Psoas muscle (tissue), 8 donors: ENCODE measurements at regions of chr1 and their contacts with region 1.

Region 1: DNA sequence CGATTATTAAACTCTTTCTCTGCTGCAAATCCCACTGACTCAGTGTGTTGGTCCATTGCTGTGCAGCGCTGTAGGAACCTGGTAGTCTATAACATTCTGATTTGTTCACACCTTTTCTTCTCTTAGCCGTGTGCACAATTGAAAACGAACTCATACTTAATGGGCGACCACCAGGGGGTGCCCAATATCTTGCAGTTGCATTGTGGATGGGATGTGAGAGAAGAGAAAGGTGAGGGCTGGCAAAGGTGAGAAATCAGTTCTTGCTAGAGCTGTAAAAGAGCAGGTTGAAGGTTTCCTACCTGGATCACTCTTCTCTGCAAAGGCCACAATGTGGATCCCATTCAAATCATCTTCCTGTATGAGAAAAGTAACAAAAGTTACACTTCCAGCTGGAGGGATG is 51.0 kb downstream of the CASQ2 start:
- DNase-seq: peak; percentile 30 to 69
- ATAC-seq: peak; percentile 50 to 89 (median 70)
- H3K4me3 ChIP-seq: no peak overlapping the region
- H3K27ac ChIP-seq: no peak overlapping the region
- H3K4me1 ChIP-seq: no peaks in the 10 kb centered on the region
- H3K27me3 ChIP-seq: no peaks in the 10 kb centered on the region
- CTCF ChIP-seq: peak; percentile 69

Region 2: GRCh38 chr1:115976062-115976920 is 258.8 kb after region 1 on chr1 and contains the start of gene SLC22A15:
- intact Hi-C with region 1: loop called in 1 of 2 experiments (anchors 10 kb)
- DNase-seq: peak; percentile 51 to 78
- ATAC-seq: peak in 3 of 4 donors; percentile 19 to 54 (median 46)
- H3K4me3 ChIP-seq: peak within 1 kb of the TSS; percentile 64
- H3K27ac ChIP-seq: no peak within 1 kb of the TSS
- H3K4me1 ChIP-seq: no peaks in the 10 kb centered on the region
- H3K27me3 ChIP-seq: peaks cover 0 to 50% (median 17%) of the 10 kb centered on the region in 3 donors
- CTCF ChIP-seq: no peak
- total RNA-seq, gene SLC22A15: 0.39 to 1.0 (median 0.50) TPM